Activated CD4-positive, alpha-beta T cell treated with anti-CD3 and anti-CD28 coated beads for 36 hours (primary cell): ENCODE measurements at regions of chr3 and their contacts with region 1.

Region 1: GRCh38 chr3:166013073-166013679 is 176.0 kb upstream of the BCHE start:
- DNase-seq: no peak
- ATAC-seq: no peak
- H3K4me3 Mint-ChIP-seq: no peak overlapping the region
- H3K27ac Mint-ChIP-seq: no peak overlapping the region
- H3K4me1 Mint-ChIP-seq: no peaks in the 10 kb centered on the region
- H3K27me3 Mint-ChIP-seq: no peaks in the 10 kb centered on the region

Region 2: DNA sequence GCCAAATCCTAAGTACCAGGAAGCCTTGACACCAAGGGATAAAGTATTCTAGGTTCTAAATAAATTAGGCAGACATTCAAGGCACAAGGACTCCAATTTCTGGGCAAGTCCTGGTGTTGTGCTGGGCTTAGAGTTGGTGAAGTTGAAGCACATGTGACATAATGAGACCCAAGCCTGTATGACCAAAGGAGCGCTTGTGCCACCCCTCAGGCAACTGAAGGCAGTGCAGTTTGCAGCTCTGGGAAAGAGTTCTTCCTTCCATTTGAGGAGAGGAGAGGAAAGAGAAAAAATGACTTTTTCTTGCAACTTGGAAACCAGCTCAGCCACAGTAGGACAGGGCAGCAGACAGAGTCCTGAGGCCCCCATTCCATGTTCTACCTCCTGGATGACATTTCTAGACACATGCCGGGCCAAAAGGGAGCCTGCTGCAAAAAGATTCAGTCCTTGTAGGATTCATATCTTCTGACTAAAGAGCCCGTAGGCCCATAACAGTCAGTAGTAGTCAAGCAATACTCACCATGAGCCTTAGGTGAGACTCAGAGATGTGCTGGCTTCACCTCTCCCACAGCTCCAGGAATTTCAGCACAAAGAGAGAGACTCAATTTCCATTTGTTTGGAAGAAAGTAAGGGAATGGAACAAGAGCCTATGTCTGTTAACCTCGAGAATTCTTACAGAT is 412.9 kb after region 1 on chr3:
- CTCF ChIA-PET with region 1: no interaction called
- POLR2A ChIA-PET with region 1: no interaction called
- intact Hi-C with region 1: no loop called
- DNase-seq: no peak
- ATAC-seq: no peak
- H3K4me3 Mint-ChIP-seq: no peak overlapping the region
- H3K27ac Mint-ChIP-seq: no peak overlapping the region
- H3K4me1 Mint-ChIP-seq: no peaks in the 10 kb centered on the region
- H3K27me3 Mint-ChIP-seq: no peaks in the 10 kb centered on the region

Region 3: GRCh38 chr3:167032261-167032876 is 1019.2 kb after region 1 on chr3:
- CTCF ChIA-PET with region 1: no interaction called
- POLR2A ChIA-PET with region 1: no interaction called
- intact Hi-C with region 1: loop called in 1 of 2 experiments (anchors 10 kb)
- DNase-seq: no peak
- ATAC-seq: no peak
- H3K4me3 Mint-ChIP-seq: no peak overlapping the region
- H3K27ac Mint-ChIP-seq: no peak overlapping the region
- H3K4me1 Mint-ChIP-seq: no peaks in the 10 kb centered on the region
- H3K27me3 Mint-ChIP-seq: no peaks in the 10 kb centered on the region